ENCODE measurements at regions of chr6 and their contacts with region 1.

Region 1: DNA sequence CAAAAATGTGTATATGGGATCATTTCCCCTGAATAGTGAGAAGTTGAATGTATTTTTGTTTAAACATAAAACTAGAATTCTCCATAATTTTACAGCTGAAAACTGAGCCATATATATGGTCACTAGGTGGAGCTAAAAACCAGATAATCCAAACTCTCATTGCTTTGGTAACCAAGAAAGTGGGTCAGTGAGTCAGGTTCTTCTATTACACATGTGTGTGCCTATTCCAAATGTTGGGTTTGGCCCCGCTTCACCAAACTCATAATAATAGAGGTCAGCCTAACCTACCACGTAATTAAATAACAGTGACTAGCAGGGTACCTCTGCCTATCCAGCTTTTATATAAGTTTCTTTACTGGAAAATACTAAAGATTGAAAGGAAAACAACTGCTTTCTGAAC is 19.3 kb upstream of the RNGTT start:
- DNase-seq: peak; percentile 48
- ATAC-seq: peak; percentile 75
- H3K4me3 ChIP-seq: no peak overlapping the region
- H3K27ac ChIP-seq: no peak overlapping the region
- H3K4me1 ChIP-seq: no peaks in the 10 kb centered on the region
- H3K27me3 ChIP-seq: no peaks in the 10 kb centered on the region
- CTCF ChIP-seq: peak; percentile 61; the same call in 1 of the 2 replicates

Region 2: GRCh38 chr6:88586371-88587149 is 396.2 kb before region 1 on chr6:
- CTCF ChIA-PET with region 1: no interaction called
- POLR2A ChIA-PET with region 1: no interaction called
- in situ Hi-C with region 1: no loop called
- intact Hi-C with region 1: no loop called
- DNase-seq: no peak
- ATAC-seq: peak; percentile 52; the same call in 1 of the 2 replicates
- H3K4me3 ChIP-seq: no peak overlapping the region
- H3K27ac ChIP-seq: no peak overlapping the region
- H3K4me1 ChIP-seq: no peaks in the 10 kb centered on the region
- H3K27me3 ChIP-seq: peaks cover 20% of the 10 kb centered on the region
- CTCF ChIP-seq: no peak

Region 3: DNA sequence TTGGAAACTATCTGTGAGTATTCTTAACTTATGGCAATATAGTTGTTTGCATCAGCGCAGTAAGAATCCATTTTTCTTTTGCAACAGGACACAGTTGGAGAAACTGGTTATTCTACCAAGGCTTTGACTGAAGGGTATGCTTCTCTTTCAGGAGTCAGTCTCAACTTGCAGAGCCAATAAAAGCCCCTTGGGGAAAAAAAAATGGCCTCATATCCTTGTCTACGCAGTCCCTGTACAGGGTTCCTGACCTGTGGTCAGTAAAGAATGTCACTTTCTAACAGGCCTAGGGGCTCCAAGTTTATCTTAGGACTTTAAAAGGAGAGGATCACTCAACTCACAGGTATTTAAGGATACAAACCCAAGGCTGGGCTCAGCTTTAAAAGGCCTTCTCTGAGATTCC is 12.4 kb before region 1 on chr6:
- CTCF ChIA-PET with region 1: no interaction called
- POLR2A ChIA-PET with region 1: no interaction called
- in situ Hi-C with region 1: no loop called
- intact Hi-C with region 1: no loop called
- DNase-seq: no peak
- ATAC-seq: no peak
- H3K4me3 ChIP-seq: no peak overlapping the region
- H3K27ac ChIP-seq: no peak overlapping the region
- H3K4me1 ChIP-seq: no peaks in the 10 kb centered on the region
- H3K27me3 ChIP-seq: no peaks in the 10 kb centered on the region
- CTCF ChIP-seq: no peak

Region 4: DNA sequence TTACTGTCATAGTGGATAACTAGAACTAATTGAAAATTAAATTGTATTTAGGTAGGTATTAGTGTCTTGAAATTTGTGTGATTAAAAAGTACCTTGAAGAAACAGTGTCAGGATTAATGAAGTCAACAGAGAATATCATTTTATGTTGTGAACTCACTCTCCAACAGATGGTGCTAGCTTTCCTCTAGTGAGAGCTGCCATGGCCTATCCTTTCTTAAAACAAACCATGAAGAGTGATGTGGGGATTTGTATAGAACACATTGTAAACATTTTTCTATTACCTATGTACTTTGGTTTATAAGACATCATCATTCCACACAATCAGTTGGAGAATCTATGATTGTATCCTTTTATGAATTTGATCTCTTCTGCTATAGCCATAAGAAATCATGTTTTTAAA is 139.9 kb after region 1 on chr6:
- CTCF ChIA-PET with region 1: no interaction called
- POLR2A ChIA-PET with region 1: no interaction called
- in situ Hi-C with region 1: no loop called
- intact Hi-C with region 1: loop called (anchors 10 kb)
- DNase-seq: no peak
- ATAC-seq: peak; percentile 83
- H3K4me3 ChIP-seq: no peak overlapping the region
- H3K27ac ChIP-seq: no peak overlapping the region
- H3K4me1 ChIP-seq: no peaks in the 10 kb centered on the region
- H3K27me3 ChIP-seq: no peaks in the 10 kb centered on the region; the same call in 1 of the 2 replicates
- CTCF ChIP-seq: peak; percentile 70; the same call in 1 of the 2 replicates

Region 5: GRCh38 chr6:89242574-89243330 is 260.0 kb after region 1 on chr6:
- CTCF ChIA-PET with region 1: interaction called, 9 read pairs
- POLR2A ChIA-PET with region 1: no interaction called
- in situ Hi-C with region 1: no loop called
- intact Hi-C with region 1: loop called (anchors 1 kb)
- DNase-seq: no peak
- ATAC-seq: peak; percentile 80
- H3K4me3 ChIP-seq: no peak overlapping the region
- H3K27ac ChIP-seq: no peak overlapping the region
- H3K4me1 ChIP-seq: no peaks in the 10 kb centered on the region
- H3K27me3 ChIP-seq: peaks cover 13% of the 10 kb centered on the region
- CTCF ChIP-seq: peak; percentile 77

Region 6: DNA sequence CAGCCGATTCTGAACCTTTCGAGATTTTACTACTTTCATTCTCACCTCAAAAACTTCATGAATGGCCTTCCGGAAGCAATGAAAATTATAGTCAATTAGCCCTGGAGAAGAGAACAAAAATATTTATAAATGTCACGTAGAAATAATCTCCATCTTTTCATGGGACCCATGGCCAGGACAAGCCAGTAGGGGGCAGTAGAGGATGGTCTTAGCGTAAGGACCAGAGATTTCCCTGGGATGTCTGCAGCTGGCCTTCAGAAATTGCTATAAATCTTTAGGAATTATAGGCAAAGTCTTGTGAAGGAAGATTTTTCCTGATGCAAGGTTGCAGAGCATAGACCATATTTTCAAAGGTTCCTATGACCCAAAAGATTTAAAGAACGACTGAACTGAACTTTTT is 385.4 kb after region 1 on chr6:
- CTCF ChIA-PET with region 1: no interaction called
- POLR2A ChIA-PET with region 1: no interaction called
- in situ Hi-C with region 1: no loop called
- intact Hi-C with region 1: loop called (anchors 10 kb)
- DNase-seq: no peak
- ATAC-seq: peak; percentile 67; the same call in 1 of the 2 replicates
- H3K4me3 ChIP-seq: no peak overlapping the region
- H3K27ac ChIP-seq: no peak overlapping the region
- H3K4me1 ChIP-seq: no peaks in the 10 kb centered on the region
- H3K27me3 ChIP-seq: no peaks in the 10 kb centered on the region
- CTCF ChIP-seq: peak; percentile 91

Measured in Panc1 (cell line).